Heart right ventricle (tissue), 16 donors: ENCODE measurements at regions of chr14 and their contacts with region 1.

Region 1: DNA sequence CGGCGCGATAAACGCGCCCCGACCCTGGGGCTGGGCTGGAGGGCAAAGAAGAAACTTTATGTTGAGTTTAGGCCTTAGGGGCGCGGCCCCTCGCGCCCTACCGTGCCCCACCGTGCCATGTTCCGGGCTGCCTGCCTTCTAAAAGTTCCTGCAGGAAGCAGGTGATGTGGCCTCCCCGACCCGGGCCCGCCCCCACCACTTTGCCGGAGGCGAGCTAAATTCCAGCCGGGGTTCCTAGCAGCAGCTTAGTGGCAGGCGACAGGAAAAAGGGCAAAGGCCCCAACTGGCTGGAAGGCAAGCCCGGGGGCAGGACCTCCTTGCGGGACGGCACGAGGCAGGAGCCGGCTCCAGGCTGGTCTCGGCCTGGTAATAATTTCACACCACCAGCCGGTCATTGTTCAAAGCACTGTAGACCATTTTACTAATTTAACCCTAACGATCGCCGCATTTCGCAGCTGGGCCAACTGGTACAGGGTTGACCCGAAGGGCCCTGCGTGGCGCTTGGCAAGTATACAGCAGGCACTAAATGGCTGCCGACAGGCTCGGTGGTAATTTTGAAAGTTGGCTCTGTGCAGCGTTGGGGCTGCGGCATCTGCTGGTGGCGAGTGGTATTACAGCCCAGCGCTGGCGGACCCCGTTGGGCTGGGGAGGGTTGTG is 895 bp upstream of the CCDC88C start:
- DNase-seq: peak; percentile 39 to 75
- ATAC-seq: peak; percentile 39 to 85 (median 73)
- H3K4me3 ChIP-seq: peak overlapping the region; percentile 18 to 84 (median 68)
- H3K27ac ChIP-seq: peak overlapping the region in 5 of 10 donors; percentile 18 to 75 (median 58)
- H3K4me1 ChIP-seq: peaks cover 3 to 50% (median 23%) of the 10 kb centered on the region in 9 donors
- H3K27me3 ChIP-seq: peaks cover 0 to 28% (median 17%) of the 10 kb centered on the region in 7 donors
- CTCF ChIP-seq: peak; percentile 89 to 99 (median 95)

Region 2: DNA sequence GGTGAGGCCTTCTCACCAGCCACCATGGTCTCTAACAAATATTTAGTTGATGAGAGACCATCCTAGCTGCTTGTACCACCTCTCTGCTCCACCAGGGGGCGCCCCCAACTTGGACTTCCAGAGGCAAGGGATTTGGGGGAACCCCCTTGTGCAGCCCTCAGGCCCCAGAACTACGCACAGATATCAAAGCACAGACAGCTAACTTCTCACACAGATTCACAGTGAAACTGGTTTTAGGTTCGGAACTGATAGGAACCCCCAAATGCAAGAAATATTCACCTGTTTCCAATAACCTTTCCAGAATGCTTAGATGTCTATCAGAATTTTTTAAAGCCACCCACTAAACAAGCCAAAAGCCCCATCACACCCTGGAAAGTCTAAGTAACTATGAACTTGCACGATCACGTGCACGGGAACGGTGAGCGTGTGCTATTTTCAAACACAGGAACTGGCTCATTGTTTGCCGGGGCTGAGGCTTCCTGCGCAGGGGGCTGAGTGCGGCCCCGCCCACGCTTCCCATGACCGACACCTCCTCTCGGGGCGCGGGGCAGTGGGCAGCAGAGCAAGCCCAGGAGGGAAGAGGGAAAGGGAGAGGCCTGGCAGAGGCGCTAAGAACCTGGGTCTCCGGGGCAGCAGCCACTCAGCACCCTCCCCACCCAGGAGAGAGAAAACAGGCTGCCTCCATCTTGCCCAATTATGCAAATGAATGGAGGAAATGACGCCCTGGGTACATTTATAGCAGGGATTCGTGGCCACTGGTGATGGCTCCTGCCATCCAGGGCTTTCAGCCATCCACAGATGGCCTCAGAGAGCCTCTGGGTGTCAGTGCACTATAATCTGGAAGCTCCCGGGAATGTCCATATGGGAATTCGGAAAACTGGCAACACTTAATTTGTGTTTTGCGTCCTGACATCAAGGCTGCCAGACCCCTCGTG is 94.6 kb before region 1 on chr14:
- intact Hi-C with region 1: loop called (anchors 1 to 5 kb)
- DNase-seq: peak; percentile 87 to 89
- ATAC-seq: peak; percentile 85 to 96 (median 91)
- H3K4me3 ChIP-seq: peak overlapping the region in 9 of 10 donors; percentile 12 to 60 (median 46)
- H3K27ac ChIP-seq: peak overlapping the region; percentile 23 to 90 (median 79)
- H3K4me1 ChIP-seq: peaks cover 4 to 77% (median 56%) of the 10 kb centered on the region in 9 donors
- H3K27me3 ChIP-seq: peaks cover 0 to 2% (median 0%) of the 10 kb centered on the region in 7 donors
- CTCF ChIP-seq: peak in 8 of 9 donors; percentile 91 to 98 (median 96)

Region 3: DNA sequence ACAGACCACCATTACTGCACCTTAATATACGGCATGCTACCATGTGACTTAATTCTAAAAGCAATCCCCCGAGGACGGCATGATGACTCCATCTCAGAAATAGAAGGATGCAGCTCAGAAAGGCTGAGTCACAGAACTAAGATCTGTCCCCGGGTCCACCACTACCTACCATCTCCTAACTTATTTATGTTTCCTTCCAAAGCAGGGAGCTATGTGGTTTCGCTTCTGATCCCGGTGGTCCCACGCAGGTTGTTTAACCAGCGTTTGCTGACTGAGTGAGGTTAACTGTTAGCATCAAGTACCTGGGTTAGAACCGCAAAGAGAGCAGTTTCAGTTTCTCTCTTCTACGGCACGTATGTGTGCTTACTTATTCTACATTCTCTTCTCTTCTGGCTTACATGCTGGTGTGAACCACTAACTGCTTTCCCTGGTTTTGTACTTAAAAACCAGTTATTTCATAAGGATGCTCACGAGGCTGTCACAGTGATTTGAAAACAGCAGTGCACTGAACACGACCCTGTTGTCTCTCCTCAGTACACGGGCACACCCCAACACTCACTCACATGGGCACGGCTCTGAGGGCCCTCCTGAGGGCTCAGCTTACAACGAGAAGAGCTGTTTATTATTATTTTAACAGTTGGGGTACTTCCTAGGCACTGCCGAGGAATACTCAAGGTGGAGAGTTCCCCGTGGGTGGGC is 67.6 kb before region 1 on chr14:
- intact Hi-C with region 1: no loop called
- DNase-seq: no peak
- ATAC-seq: no peak
- H3K4me3 ChIP-seq: peak overlapping the region in 1 of 10 donors; percentile 34
- H3K27ac ChIP-seq: peak overlapping the region in 1 of 10 donors; percentile 71
- H3K4me1 ChIP-seq: peaks cover 0 to 80% (median 22%) of the 10 kb centered on the region in 9 donors
- H3K27me3 ChIP-seq: peaks cover 0 to 2% (median 0%) of the 10 kb centered on the region in 7 donors
- CTCF ChIP-seq: no peak

Region 4: DNA sequence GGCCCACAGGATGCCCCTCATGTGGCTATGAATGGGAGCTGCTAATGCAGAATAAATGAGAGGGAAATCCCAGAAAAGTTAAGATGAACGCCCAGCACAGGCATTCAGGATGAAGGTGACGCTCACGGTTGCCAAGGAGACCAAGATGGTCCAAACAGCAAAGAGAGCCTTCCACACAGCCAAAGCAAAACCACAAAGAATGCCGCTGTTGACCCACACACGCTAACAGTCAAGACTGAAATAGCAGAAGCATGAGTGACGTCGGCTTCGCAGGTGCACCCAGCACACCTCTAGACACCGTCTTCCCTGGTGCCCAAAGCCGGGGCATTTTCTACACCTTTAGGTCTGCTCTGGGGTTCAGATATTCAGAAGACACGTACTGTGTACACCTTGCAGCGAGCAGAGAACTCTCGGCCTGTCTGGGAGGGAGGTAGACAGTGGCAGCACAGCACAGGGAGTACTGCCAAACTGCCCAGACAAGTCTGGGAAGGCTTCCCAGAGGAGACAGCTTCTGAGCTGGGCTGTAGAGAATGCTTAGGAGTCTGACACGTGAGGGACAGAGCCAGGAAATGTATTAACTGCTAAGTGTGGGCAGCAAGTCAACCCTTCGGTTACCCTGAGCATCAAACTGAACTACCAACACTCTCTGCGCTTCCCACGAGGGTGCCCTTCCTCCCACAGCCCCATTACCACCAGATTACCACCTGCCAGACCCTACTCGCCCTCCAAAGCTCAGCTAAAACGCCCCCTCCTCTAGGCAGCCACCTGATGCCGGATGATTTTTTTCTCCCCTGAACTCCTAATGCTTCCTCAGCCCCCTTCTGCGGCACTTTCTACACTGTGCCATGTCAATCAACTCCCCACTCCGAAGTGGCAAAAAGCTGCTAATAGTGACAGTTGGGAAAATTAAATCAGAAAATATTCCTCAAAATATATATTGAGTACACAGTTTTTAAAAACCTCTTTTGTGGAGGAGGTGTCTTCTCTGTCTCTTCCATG is 51.0 kb before region 1 on chr14:
- intact Hi-C with region 1: loop called in 3 of 10 experiments (anchors 5 to 10 kb)
- DNase-seq: peak in 1 of 2 donors; percentile 30
- ATAC-seq: peak in 5 of 8 donors; percentile 10 to 59 (median 37)
- H3K4me3 ChIP-seq: peak overlapping the region in 1 of 10 donors; percentile 17
- H3K27ac ChIP-seq: peak overlapping the region in 8 of 10 donors; percentile 11 to 66 (median 52)
- H3K4me1 ChIP-seq: peaks cover 10 to 97% (median 45%) of the 10 kb centered on the region in 9 donors
- H3K27me3 ChIP-seq: peaks cover 0 to 19% (median 0%) of the 10 kb centered on the region in 7 donors
- CTCF ChIP-seq: no peak

Region 5: GRCh38 chr14:91373591-91374254 is 44.8 kb before region 1 on chr14:
- intact Hi-C with region 1: loop called in 4 of 10 experiments (anchors 5 to 10 kb)
- DNase-seq: no peak
- ATAC-seq: peak in 3 of 8 donors; percentile 19 to 52 (median 33)
- H3K4me3 ChIP-seq: peak overlapping the region in 1 of 10 donors; percentile 8
- H3K27ac ChIP-seq: peak overlapping the region in 8 of 10 donors; percentile 7 to 71 (median 46)
- H3K4me1 ChIP-seq: peaks cover 7 to 99% (median 73%) of the 10 kb centered on the region in 9 donors
- H3K27me3 ChIP-seq: peaks cover 0 to 36% (median 0%) of the 10 kb centered on the region in 7 donors
- CTCF ChIP-seq: no peak

Region 6: GRCh38 chr14:91439345-91439744 is 20.8 kb after region 1 on chr14:
- intact Hi-C with region 1: no loop called
- DNase-seq: no peak
- ATAC-seq: no peak
- H3K4me3 ChIP-seq: no peak overlapping the region
- H3K27ac ChIP-seq: no peak overlapping the region
- H3K4me1 ChIP-seq: no peaks in the 10 kb centered on the region
- H3K27me3 ChIP-seq: peaks cover 0 to 22% (median 4%) of the 10 kb centered on the region in 7 donors
- CTCF ChIP-seq: no peak

Region 7: DNA sequence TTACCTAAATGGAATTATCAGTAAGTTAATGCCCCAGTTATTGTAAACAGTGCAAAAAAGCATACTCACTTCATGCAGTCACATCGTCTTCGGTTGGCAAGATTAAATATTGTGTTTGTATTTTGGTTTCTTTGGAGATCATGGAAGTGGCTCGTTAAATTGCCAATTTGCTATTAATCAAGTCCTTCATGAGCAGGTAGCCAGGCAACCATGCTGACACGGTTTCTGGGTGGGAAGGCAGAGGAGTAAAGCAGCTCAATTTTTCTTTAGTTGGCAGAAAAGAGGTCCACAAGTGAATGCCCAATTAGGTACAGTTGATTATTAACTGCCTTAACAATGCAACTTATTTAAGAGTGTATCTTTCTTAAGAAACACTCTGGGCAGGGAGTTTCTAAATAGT is 47.7 kb after region 1 on chr14:
- intact Hi-C with region 1: no loop called
- DNase-seq: no peak
- ATAC-seq: no peak
- H3K4me3 ChIP-seq: no peak overlapping the region
- H3K27ac ChIP-seq: peak overlapping the region in 1 of 10 donors; percentile 8
- H3K4me1 ChIP-seq: no peaks in the 10 kb centered on the region
- H3K27me3 ChIP-seq: no peaks in the 10 kb centered on the region
- CTCF ChIP-seq: no peak

Region 8: GRCh38 chr14:92039719-92040430 is 621.4 kb after region 1 on chr14 and contains the start of gene TRIP11:
- intact Hi-C with region 1: no loop called
- DNase-seq: peak; percentile 94 to 95
- ATAC-seq: peak; percentile 98 to 99 (median 99)
- H3K4me3 ChIP-seq: peak within 1 kb of the TSS; percentile 63 to 97 (median 80)
- H3K27ac ChIP-seq: peak within 1 kb of the TSS; percentile 88 to 100 (median 96)
- H3K4me1 ChIP-seq: peaks cover 7 to 52% (median 43%) of the 10 kb centered on the region in 9 donors
- H3K27me3 ChIP-seq: no peaks in the 10 kb centered on the region
- CTCF ChIP-seq: no peak
- total RNA-seq, gene TRIP11: 46.5 to 73.3 (median 59.7) TPM